Sciatic nerve (tissue), 2 donors: ENCODE measurements at regions of chr3 and their contacts with region 1.

Region 1: GRCh38 chr3:5304789-5305683 is 117.5 kb downstream of the EDEM1 start:
- DNase-seq: no peak
- ATAC-seq: no peak

Region 2: GRCh38 chr3:5187156-5187919 is 117.7 kb before region 1 on chr3 and contains the start of gene EDEM1:
- intact Hi-C with region 1: no loop called
- DNase-seq: peak; percentile 97
- ATAC-seq: peak; percentile 98
- total RNA-seq, gene EDEM1: 29.6 TPM

Region 3: GRCh38 chr3:5332270-5332956 is 27.4 kb after region 1 on chr3:
- intact Hi-C with region 1: loop called (anchors 1 kb)
- DNase-seq: no peak
- ATAC-seq: no peak